AG04449 (cell line): ENCODE measurements at regions of chr1 and their contacts with region 1.

Region 1: GRCh38 chr1:186304982-186305949 is 69.8 kb downstream of the TPR start:
- DNase-seq: no peak
- H3K4me3 ChIP-seq: no peak overlapping the region
- CTCF ChIP-seq: peak; percentile 61

Region 2: DNA sequence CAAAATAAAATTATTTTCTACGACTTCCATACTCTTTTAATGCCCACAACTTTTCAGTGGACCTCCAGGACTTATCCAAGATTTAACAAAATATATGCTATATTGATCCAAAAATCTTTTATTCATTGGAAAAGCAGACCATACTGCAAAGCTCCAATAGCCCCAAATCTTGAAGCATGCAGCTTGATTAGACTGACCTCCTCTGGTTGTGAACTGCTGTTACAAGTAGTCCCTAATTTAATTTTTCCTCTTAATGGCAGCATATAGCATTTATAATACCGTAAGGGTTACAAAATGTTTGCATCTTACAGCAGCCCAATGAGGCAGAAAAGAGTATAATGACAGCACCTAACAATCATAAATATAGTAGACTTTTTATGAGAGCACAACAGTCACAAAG is 20.0 kb after region 1 on chr1:
- CTCF ChIA-PET with region 1: interaction called, 12 read pairs
- POLR2A ChIA-PET with region 1: no interaction called
- DNase-seq: peak; percentile 3
- H3K4me3 ChIP-seq: no peak overlapping the region
- CTCF ChIP-seq: peak; percentile 36